ENCODE measurements at regions of chr10 and their contacts with region 1.

Region 1: DNA sequence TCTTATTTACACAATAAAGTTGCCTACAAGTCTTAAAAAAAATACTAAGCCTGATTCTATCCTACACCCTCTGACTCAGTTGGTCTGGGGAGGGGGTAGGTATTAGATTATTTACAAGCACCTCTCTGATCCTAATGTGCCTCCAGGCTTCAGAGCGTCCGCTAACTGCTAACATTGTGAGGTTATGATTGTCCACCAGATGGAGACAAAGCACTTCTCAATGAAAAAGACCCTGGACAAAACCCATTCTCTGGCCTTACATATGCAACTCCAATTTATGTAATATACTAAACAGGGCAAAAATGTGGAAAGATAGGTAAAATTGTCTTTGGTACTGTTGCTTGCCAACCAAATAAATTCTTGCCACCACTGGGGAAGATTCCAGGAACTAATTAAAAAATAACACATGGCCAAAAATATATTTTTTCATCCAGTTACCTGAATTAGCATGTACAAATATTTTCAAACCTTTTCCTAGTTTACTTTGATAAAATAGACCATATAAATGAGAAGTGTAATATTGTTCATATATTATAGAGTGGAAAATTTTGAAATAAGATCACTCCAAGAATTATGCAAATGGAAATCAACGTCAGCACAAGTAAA is 92.4 kb downstream of the KIF20B start:
- DNase-seq: peak; percentile 74
- ATAC-seq: peak; percentile 92
- H3K4me3 ChIP-seq: no peak overlapping the region
- H3K27ac ChIP-seq: no peak overlapping the region
- H3K4me1 ChIP-seq: no peaks in the 10 kb centered on the region
- H3K27me3 ChIP-seq: no peaks in the 10 kb centered on the region
- CTCF ChIP-seq: peak; percentile 81
- POLR2A ChIP-seq: no peak
- RAD21 ChIP-seq: peak; percentile 90

Region 2: DNA sequence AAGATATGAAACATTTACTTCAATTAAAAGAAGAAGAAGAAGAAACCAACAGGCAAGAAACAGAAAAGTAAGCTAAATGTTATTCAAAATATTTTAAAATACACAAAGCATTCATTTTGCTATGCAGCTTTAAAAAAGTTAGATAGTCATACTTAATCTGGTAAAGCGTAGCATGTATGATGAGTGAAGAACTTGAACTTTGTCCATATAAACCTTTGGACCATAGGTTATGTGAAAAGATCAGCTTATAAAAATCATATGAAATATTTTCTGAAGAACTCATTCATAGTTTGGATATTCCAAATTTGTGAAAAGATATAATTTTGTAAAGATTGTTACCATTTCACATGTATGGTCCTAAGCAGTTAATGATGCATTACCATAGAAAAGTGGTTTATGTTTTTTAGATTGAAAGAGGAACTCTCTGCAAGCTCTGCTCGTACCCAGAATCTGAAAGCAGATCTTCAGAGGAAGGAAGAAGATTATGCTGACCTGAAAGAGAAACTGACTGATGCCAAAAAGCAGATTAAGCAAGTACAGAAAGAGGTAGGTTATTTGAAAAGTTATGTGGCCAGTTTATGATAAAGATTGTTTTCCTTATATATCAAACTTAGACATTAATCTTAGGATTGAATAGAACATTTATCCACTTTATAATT is 55.1 kb before region 1 on chr10:
- CTCF ChIA-PET with region 1: no interaction called
- POLR2A ChIA-PET with region 1: no interaction called
- dilution Hi-C with region 1: no loop called
- in situ Hi-C with region 1: no loop called
- intact Hi-C with region 1: no loop called
- DNase-seq: no peak
- ATAC-seq: no peak
- H3K4me3 ChIP-seq: no peak overlapping the region
- H3K27ac ChIP-seq: no peak overlapping the region
- H3K4me1 ChIP-seq: no peaks in the 10 kb centered on the region
- H3K27me3 ChIP-seq: no peaks in the 10 kb centered on the region
- CTCF ChIP-seq: no peak
- POLR2A ChIP-seq: no peak
- RAD21 ChIP-seq: no peak

Region 3: GRCh38 chr10:89887830-89888229 is 94.1 kb after region 1 on chr10:
- CTCF ChIA-PET with region 1: no interaction called
- POLR2A ChIA-PET with region 1: no interaction called
- dilution Hi-C with region 1: no loop called
- in situ Hi-C with region 1: no loop called
- intact Hi-C with region 1: no loop called
- DNase-seq: no peak
- ATAC-seq: no peak
- H3K4me3 ChIP-seq: no peak overlapping the region
- H3K27ac ChIP-seq: no peak overlapping the region
- H3K4me1 ChIP-seq: no peaks in the 10 kb centered on the region
- H3K27me3 ChIP-seq: no peaks in the 10 kb centered on the region; the same call in 1 of the 2 replicates
- CTCF ChIP-seq: no peak
- POLR2A ChIP-seq: no peak
- RAD21 ChIP-seq: no peak

Region 4: GRCh38 chr10:89954787-89955566 is 161.2 kb after region 1 on chr10:
- CTCF ChIA-PET with region 1: no interaction called
- POLR2A ChIA-PET with region 1: no interaction called
- dilution Hi-C with region 1: no loop called
- in situ Hi-C with region 1: no loop called
- intact Hi-C with region 1: loop called (anchors 2 kb)
- DNase-seq: no peak
- ATAC-seq: no peak
- H3K4me3 ChIP-seq: no peak overlapping the region
- H3K27ac ChIP-seq: no peak overlapping the region
- H3K4me1 ChIP-seq: no peaks in the 10 kb centered on the region
- H3K27me3 ChIP-seq: no peaks in the 10 kb centered on the region
- CTCF ChIP-seq: peak; percentile 38; the same call in 1 of the 2 replicates
- POLR2A ChIP-seq: no peak
- RAD21 ChIP-seq: no peak

Region 5: DNA sequence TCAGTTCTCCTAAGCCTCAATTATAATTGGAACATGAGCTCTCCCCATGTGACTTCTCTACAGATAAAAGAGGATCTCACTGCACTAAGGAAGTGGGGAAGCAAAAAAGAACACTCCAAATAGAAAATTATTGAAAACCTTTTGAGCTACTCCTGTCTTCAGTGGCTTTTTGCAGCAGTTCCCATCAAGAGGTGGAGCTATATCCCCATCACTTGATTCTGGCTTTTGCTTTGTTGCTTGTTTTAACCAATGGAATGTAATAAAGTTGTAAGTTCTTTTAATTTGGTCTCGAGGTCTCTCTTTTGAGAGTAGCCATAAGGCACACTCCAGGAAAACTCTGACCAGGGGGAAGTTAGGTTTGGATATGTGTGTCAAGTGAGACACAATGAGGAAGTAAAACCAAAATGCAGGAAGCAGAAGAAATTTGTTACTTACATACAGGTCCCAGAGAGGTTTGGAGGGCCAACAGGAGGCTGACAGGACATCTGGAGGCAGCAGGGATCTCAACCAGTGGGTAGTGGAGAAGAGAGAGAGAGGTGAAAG is 494.7 kb after region 1 on chr10:
- CTCF ChIA-PET with region 1: no interaction called
- POLR2A ChIA-PET with region 1: no interaction called
- dilution Hi-C with region 1: no loop called
- in situ Hi-C with region 1: no loop called
- intact Hi-C with region 1: loop called (anchors 1 kb)
- DNase-seq: peak; percentile 61
- ATAC-seq: peak; percentile 81
- H3K4me3 ChIP-seq: no peak overlapping the region
- H3K27ac ChIP-seq: no peak overlapping the region
- H3K4me1 ChIP-seq: peaks cover 2% of the 10 kb centered on the region; the same call in 1 of the 2 replicates
- H3K27me3 ChIP-seq: no peaks in the 10 kb centered on the region
- CTCF ChIP-seq: peak; percentile 69
- POLR2A ChIP-seq: no peak
- RAD21 ChIP-seq: peak; percentile 73

Region 6: GRCh38 chr10:90598513-90598912 is 804.8 kb after region 1 on chr10:
- CTCF ChIA-PET with region 1: no interaction called
- POLR2A ChIA-PET with region 1: no interaction called
- dilution Hi-C with region 1: no loop called
- in situ Hi-C with region 1: loop called (anchors 5 kb)
- intact Hi-C with region 1: loop called (anchors 1 kb)
- DNase-seq: no peak
- ATAC-seq: no peak
- H3K4me3 ChIP-seq: no peak overlapping the region
- H3K27ac ChIP-seq: no peak overlapping the region
- H3K4me1 ChIP-seq: no peaks in the 10 kb centered on the region
- H3K27me3 ChIP-seq: peaks cover 9% of the 10 kb centered on the region
- CTCF ChIP-seq: no peak
- POLR2A ChIP-seq: no peak
- RAD21 ChIP-seq: no peak

Region 7: DNA sequence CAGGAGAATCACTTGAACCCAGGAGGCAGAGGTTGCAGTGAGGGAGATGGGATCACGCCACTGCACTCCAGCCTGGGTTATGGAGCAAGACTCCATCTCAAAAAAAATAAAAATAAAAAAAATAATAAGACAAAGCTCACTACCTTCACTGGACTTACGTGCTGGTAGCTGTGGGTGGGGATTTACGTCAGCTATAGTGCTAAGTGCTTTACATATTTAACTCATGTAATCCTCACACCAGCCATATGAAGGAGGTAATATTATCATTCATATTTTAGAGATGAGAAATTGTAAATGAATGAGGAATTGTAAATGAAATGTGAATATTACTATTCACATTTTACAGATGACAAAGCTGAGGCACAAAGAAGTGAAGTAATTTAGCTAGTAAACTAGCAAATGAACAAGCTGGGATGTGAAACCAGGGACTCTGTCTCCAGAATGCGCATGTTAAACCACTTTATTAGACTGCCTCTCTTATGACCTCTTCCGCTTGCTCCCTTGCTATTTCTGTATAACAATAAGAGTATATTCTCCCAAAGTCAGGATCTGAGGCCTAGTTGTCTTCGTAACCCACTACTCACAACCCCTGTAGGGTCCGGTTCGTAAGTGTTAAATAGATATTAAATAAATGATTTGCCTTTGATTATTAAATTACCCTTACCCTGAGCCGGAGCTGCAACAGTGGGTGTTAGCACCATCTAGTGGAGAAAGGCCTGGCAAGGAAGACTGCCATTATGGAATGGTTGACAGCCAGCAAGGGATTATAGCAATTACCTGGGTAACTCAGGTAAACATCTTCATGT is 993.8 kb after region 1 on chr10:
- CTCF ChIA-PET with region 1: no interaction called
- POLR2A ChIA-PET with region 1: no interaction called
- dilution Hi-C with region 1: no loop called
- in situ Hi-C with region 1: loop called (anchors 5 kb)
- intact Hi-C with region 1: loop called (anchors 1 kb)
- DNase-seq: peak; percentile 30
- ATAC-seq: peak; percentile 72
- H3K4me3 ChIP-seq: no peak overlapping the region
- H3K27ac ChIP-seq: no peak overlapping the region
- H3K4me1 ChIP-seq: no peaks in the 10 kb centered on the region
- H3K27me3 ChIP-seq: peaks cover 4% of the 10 kb centered on the region
- CTCF ChIP-seq: peak; percentile 71
- POLR2A ChIP-seq: no peak
- RAD21 ChIP-seq: peak; percentile 67

Measured in IMR-90 (cell line).